ENCODE measurements at regions of chr17 and their contacts with region 1.

Region 1: DNA sequence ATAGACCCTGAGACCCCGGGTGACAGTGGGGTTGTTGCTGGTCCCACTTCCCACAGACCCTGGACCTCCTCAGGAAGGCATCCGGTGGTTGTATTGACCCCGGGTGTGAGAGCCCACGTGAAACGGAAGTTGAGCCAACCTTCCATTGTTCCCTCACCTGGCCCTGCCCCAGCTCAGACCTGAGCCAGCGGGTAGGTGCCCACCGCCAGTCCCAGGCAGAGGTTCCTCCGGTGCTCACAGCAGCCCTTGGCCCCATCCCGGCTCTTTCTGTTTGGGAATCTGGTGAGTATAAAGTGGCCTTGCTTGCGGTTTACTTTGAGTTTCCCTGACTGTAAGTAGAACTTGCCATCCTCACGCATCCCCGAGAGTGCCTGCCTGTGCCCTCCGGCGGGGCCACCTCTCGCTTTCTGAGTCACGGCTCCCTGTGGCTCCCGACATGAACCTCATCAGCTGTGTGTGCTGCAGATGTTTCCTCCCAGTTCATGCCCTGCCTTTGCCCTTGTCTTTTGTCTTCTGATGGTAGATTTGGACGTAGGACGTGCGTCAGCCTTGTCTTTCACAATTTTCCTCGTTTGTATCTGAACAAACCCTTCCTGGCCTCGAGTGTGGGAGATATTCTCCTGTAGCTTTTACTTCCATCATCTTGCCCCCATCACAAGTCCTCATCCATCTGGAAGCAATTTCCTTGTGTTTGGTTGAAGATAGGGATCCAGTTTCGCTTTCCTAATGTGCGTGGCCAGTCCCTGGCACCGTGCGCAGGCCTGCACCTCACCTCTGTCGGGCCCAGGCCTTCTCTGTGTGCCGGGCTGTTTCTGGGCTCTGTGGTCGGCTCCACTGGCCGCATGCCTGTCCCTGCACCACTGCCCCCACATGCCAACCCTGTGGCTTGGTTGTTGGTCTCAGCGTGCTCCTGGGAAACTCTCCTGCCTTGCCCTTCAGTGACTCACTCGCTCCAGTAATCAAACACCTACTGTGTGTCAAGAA is 76.0 kb downstream of the METRNL start:
- DNase-seq: peak; percentile 93 to 97 (median 95)
- H3K4me3 ChIP-seq: peak overlapping the region in 1 of 3 experiments; percentile 21
- H3K4me3 Mint-ChIP-seq: peak overlapping the region; percentile 65 to 73
- H3K27ac ChIP-seq: peak overlapping the region; percentile 49 to 74
- H3K27ac Mint-ChIP-seq: peak overlapping the region; percentile 43 to 97 (median 95)
- H3K4me1 ChIP-seq: peaks cover 39 to 40% of the 10 kb centered on the region in 2 donors
- H3K4me1 Mint-ChIP-seq: peaks cover 49% of the 10 kb centered on the region
- H3K27me3 ChIP-seq: no peaks in the 10 kb centered on the region
- H3K27me3 Mint-ChIP-seq: peaks cover 4 to 10% (median 9%) of the 10 kb centered on the region in 3 donors
- CTCF ChIP-seq: no peak

Region 2: DNA sequence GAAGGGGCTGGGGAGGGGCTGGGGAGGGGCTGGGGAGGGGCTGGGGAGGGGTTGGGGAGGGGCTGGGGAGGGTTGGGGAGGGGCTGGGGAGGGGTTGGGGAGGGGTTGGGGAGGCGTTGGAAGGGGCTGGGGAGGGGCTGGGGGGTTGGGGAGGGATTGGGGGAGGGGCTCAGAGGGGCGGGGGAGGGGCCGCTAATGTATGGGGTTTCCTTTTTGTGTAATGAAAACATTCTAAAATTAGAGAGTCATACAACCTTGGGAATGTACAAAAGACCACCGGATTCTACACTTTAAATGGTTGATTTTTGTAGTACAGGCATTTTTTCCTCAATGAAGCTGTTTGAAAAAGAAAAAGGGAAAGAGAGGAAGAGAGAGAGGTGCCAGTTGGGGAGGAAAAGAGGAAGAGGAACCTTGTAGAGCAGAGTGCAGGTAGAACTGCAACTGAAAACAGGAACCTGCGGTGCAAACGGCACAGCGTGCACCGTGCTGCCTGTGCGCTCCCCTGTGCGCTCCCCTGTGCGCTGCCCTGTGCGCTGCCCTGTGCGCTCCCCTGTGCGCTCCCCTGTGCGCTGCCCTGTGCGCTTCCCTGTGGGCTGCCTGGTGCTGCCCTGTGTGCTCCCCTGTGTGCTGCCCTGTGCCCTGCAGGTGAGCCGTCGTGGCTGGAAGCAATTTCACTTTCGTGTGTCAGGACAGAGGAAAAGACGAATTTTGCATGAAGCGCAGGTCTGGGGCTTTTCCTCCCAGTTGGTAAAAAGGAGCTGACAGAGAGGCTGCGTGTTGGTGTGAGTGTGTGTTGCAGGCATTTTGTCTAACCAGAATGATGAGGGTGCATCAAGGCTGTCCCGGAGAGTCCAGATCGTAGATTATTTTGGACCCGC is 35.2 kb before region 1 on chr17:
- intact Hi-C with region 1: loop called in 1 of 2 experiments (anchors 5 kb)
- DNase-seq: peak; percentile 77 to 89 (median 87)
- H3K4me3 ChIP-seq: peak overlapping the region in 1 of 3 experiments; percentile 52
- H3K4me3 Mint-ChIP-seq: peak overlapping the region; percentile 11 to 77
- H3K27ac ChIP-seq: no peak overlapping the region
- H3K27ac Mint-ChIP-seq: peak overlapping the region in 6 of 7 donors; percentile 15 to 77 (median 66)
- H3K4me1 ChIP-seq: peaks cover 59 to 69% of the 10 kb centered on the region in 2 donors
- H3K4me1 Mint-ChIP-seq: peaks cover 73% of the 10 kb centered on the region
- H3K27me3 ChIP-seq: peaks cover 0 to 6% of the 10 kb centered on the region in 2 donors
- H3K27me3 Mint-ChIP-seq: peaks cover 33 to 39% (median 35%) of the 10 kb centered on the region in 3 donors
- CTCF ChIP-seq: no peak

Region 3: DNA sequence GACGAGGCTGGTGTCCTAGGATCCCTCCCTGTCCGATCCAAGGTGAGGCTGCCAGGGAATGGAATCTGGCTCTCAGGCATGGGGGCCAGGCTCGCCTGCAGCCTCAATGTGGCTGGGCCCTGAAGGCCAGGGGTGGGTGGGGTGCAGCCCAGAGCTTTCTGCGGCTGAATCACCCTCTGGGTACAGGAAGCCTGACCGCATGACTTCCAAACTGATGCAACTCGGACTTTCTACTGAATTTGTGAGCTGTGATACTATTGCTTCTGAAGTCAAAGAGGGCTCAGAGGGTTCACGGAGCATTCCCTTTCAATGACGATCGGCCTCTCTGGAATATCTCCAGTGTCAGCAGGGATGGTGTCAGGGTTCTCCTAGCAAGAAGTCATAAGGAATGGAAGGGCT is 47.6 kb after region 1 on chr17:
- intact Hi-C with region 1: loop called in 1 of 2 experiments (anchors 2 kb)
- DNase-seq: peak; percentile 94 to 98 (median 97)
- H3K4me3 ChIP-seq: peak overlapping the region in 1 of 3 experiments; percentile 23
- H3K4me3 Mint-ChIP-seq: peak overlapping the region; percentile 68 to 80
- H3K27ac ChIP-seq: peak overlapping the region; percentile 94 to 100
- H3K27ac Mint-ChIP-seq: peak overlapping the region; percentile 100
- H3K4me1 ChIP-seq: peaks cover 72 to 82% of the 10 kb centered on the region in 2 donors
- H3K4me1 Mint-ChIP-seq: peaks cover 74% of the 10 kb centered on the region
- H3K27me3 ChIP-seq: no peaks in the 10 kb centered on the region
- H3K27me3 Mint-ChIP-seq: peaks cover 0 to 2% (median 0%) of the 10 kb centered on the region in 3 donors
- CTCF ChIP-seq: no peak

Measured in CD14-positive monocyte (primary cell).